ENCODE measurements at regions of chr2 and their contacts with region 1.

Region 1: DNA sequence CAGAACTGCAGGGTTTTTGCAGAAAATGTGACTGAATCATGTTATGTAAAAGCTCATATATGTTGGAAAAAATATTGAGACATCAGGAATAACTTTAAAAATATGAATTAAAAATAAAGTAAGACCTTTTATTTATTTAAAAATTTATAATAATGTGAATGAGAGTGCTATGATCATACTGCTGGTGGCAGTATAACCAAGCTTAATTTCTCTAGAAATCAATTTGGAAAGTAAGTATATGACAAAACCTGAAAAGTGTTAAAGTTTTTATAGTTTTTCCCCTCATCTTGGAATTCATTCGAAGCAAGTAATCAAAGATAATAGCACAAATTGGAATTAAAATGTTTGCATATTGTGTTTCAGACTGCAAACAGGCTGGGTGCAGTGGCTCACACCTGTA is 7.5 kb downstream of the SLC39A10 start:
- DNase-seq: no peak
- ATAC-seq: no peak
- H3K4me3 ChIP-seq: no peak overlapping the region
- H3K27ac ChIP-seq: no peak overlapping the region
- H3K4me1 ChIP-seq: peaks cover 35% of the 10 kb centered on the region
- CTCF ChIP-seq: peak; percentile 40; the same call in 2 of the 3 replicates
- EP300 ChIP-seq: no peak
- POLR2A ChIP-seq: no peak
- RAD21 ChIP-seq: peak; percentile 41 to 54; a peak in 4 of 5 replicates

Region 2: DNA sequence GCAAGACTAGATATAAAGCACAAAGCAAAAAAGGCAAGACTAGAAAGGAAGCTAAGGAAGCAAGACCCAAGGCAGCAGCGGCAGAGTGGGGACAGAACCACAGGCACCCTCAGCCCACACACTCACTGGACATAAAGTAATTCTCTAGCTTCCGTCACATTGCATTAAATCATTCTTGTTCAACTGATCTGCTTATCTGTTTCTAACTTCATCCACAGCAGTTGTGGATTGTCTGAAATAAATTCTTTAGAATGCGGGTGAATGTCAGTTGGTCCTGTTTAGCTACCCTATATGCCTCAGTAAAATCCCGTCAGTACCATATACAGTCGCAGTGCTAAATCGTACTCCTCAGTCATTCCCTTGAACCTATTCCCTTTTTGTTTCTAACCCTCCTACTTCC is 190.7 kb before region 1 on chr2:
- CTCF ChIA-PET with region 1: no interaction called
- POLR2A ChIA-PET with region 1: no interaction called
- DNase-seq: no peak
- ATAC-seq: no peak
- H3K4me3 ChIP-seq: no peak overlapping the region
- H3K27ac ChIP-seq: no peak overlapping the region; a peak in 1 of 6 replicates
- H3K4me1 ChIP-seq: no peaks in the 10 kb centered on the region
- CTCF ChIP-seq: no peak
- EP300 ChIP-seq: no peak
- POLR2A ChIP-seq: no peak
- RAD21 ChIP-seq: no peak

Region 3: DNA sequence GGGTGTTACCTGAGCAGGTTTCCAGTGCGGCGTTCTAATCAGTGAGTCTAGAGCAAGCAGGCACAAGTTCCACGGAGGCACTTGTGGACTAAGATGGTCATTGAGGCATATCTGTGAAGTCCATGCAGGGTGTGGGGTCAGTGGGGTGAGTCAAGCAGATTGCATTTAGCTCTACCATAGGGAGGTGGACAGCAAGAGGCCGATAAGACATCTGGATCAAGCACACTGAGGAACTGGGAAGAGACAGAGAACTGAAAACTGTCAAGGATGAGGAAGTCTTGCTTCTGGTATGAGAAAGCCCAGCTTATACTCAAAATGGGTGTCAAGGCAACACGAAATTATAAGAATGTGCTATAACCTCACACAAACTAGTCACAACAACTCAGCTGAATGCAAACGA is 68.7 kb before region 1 on chr2:
- CTCF ChIA-PET with region 1: no interaction called
- POLR2A ChIA-PET with region 1: no interaction called
- DNase-seq: no peak
- ATAC-seq: no peak
- H3K4me3 ChIP-seq: no peak overlapping the region
- H3K27ac ChIP-seq: no peak overlapping the region
- H3K4me1 ChIP-seq: peaks cover 17% of the 10 kb centered on the region
- CTCF ChIP-seq: no peak
- EP300 ChIP-seq: no peak
- POLR2A ChIP-seq: no peak
- RAD21 ChIP-seq: no peak

Region 4: DNA sequence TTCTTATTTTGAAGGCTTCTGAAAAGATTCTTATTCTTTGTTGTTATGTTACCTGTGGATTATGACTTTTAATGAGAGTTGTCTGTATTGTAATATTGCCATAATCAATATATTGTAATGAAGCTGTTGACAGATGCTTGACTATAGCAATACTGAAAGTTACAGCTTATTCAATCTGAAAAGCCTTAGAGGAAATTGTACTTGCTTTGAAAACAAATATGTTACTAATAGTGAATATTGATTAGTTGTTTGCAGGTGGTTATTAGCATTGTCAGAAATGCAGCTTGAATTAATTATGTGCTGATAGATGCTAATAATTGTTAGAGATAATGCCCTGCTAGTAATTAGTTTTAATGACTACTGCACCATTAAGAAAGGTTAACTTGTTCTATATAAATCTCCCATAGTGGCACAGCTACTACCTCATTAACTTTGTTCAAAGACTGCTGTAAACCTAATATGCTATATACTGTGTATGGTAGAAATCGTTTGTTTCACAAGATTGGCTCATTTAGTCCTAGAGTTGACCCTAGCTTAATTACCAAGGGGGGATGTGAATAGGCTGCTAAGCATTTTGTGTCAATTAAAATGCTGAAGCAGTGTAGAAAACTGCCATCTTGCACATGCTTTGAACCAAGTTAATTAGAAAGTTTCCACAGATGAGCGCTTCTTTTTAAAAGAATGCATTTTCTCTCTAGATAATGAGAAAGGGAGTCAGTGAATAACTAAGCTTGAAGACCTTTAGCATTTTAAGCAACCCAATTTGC is 23.0 kb after region 1 on chr2:
- CTCF ChIA-PET with region 1: no interaction called
- POLR2A ChIA-PET with region 1: no interaction called
- DNase-seq: no peak
- ATAC-seq: no peak
- H3K4me3 ChIP-seq: no peak overlapping the region
- H3K27ac ChIP-seq: no peak overlapping the region
- H3K4me1 ChIP-seq: 0 out of 3 replicates have a peak, but pooled peaks cover 4% of the 10 kb centered on the region
- CTCF ChIP-seq: no peak
- EP300 ChIP-seq: no peak
- POLR2A ChIP-seq: no peak
- RAD21 ChIP-seq: no peak

Region 5: GRCh38 chr2:195937176-195937575 is 272.6 kb after region 1 on chr2:
- CTCF ChIA-PET with region 1: interaction called, 11 read pairs
- POLR2A ChIA-PET with region 1: no interaction called
- DNase-seq: no peak
- ATAC-seq: no peak
- H3K4me3 ChIP-seq: no peak overlapping the region
- H3K27ac ChIP-seq: no peak overlapping the region; a peak in 1 of 6 replicates
- H3K4me1 ChIP-seq: peaks cover 8% of the 10 kb centered on the region; the same call in 1 of the 3 replicates
- CTCF ChIP-seq: no peak
- EP300 ChIP-seq: no peak
- POLR2A ChIP-seq: no peak
- RAD21 ChIP-seq: no peak